ENCODE measurements at regions of chr2 and their contacts with region 1.

Region 1: DNA sequence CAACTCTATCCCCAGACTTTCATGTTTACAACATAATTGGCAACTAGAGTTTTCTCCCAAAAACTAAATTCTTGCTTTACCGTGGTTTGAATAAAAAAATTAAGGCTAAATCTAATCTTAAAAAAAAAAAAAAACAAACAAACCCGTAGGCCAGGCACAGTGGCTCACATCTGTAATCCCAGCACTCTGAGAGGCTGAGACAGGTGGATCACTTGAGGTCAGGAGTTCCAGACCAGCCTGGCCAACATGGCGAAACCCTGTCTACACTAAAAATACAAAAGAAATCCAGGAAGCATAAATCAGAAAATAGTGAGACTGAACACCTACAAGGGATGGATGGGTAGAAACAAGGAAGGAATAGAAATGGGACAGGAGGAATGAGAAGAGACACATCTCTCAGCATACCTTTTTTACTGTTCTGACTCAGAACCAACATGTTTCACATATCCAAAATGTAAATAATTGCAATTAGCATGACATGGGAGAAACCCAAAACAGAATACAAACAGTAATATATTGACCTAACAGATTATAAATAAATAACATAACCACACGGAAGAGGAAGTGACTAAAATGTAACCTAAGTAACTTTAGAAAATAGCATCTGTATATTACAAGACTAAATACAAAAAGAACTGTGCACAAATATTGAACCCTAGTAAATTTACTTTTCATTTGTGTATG is 17.5 kb downstream of the MGAT4A start:
- DNase-seq: no peak
- ATAC-seq: no peak
- H3K4me3 ChIP-seq: no peak overlapping the region
- H3K27ac ChIP-seq: no peak overlapping the region
- H3K4me1 ChIP-seq: peaks cover 9% of the 10 kb centered on the region
- H3K27me3 ChIP-seq: no peaks in the 10 kb centered on the region

Region 2: DNA sequence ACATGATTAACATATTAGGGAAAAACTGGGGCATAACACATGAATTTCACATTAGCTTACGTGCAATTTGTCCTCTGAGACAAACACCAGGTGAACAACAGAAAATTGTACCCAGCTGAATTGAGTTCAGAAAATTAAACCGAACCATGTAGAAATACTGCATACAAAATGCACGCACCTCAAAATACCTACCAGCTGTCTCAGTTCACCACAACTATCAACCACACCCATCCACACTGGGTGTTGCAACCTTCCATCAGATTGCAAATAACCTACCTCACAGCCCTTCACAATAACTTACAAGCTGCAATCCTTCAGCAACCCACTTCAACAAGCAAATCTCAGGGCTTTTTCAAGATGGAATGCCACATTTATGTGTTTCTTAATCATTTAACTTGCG is 49.1 kb before region 1 on chr2:
- intact Hi-C with region 1: loop called in 1 of 4 experiments (anchors 10 kb)
- DNase-seq: no peak
- ATAC-seq: no peak
- H3K4me3 ChIP-seq: no peak overlapping the region
- H3K27ac ChIP-seq: no peak overlapping the region
- H3K4me1 ChIP-seq: no peaks in the 10 kb centered on the region
- H3K27me3 ChIP-seq: no peaks in the 10 kb centered on the region